ENCODE measurements at regions of chr5 and their contacts with region 1.

Region 1: DNA sequence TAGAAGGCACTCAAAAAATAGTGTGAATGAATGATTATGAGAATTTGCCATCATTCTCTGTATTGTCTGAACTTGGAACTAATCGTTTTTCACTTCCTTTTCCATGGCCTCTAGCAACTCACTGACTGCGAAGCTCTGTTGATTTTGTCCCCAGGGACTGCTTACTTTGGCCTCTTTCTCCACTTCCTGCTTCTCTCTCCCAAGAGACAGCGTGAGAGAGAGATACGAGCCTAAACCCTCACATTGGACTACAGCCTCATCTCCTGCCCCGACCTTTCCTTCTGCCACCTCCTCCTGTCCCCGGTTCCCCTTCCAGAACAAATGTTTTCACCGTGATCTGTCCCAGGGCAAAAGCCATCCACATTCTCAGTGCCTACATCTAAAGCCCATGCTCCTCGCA is 300.8 kb upstream of the PANK3 start:
- DNase-seq: no peak
- ATAC-seq: no peak
- H3K4me3 ChIP-seq: no peak overlapping the region
- H3K27ac ChIP-seq: no peak overlapping the region
- H3K4me1 ChIP-seq: no peaks in the 10 kb centered on the region
- H3K27me3 ChIP-seq: peaks cover 5 to 47% of the 10 kb centered on the region in 2 experiments; a peak in 4 of 5 replicates
- CTCF ChIP-seq: no peak
- EP300 ChIP-seq: no peak
- POLR2A ChIP-seq: no peak
- RAD21 ChIP-seq: no peak

Region 2: GRCh38 chr5:168679515-168679920 is 200.4 kb before region 1 on chr5:
- CTCF ChIA-PET with region 1: no interaction called
- POLR2A ChIA-PET with region 1: no interaction called
- in situ Hi-C with region 1: no loop called
- intact Hi-C with region 1: loop called (anchors 10 kb)
- DNase-seq: peak; percentile 71 to 79 (median 76)
- ATAC-seq: peak; percentile 91
- H3K4me3 ChIP-seq: no peak overlapping the region
- H3K27ac ChIP-seq: no peak overlapping the region
- H3K4me1 ChIP-seq: no peaks in the 10 kb centered on the region; a peak in 1 of 5 replicates
- H3K27me3 ChIP-seq: peaks cover 0 to 5% of the 10 kb centered on the region in 2 experiments; a peak in 1 of 5 replicates
- CTCF ChIP-seq: peak; percentile 81 to 85 (median 85)
- EP300 ChIP-seq: no peak
- POLR2A ChIP-seq: no peak
- RAD21 ChIP-seq: peak; percentile 76 to 84